CD8-positive, alpha-beta memory T cell (primary cell): ENCODE measurements at regions of chr16 and their contacts with region 1.

Region 1: GRCh38 chr16:50681021-50681885 is at the start of gene SNX20:
- DNase-seq: peak; percentile 55 to 81 (median 71)
- H3K4me3 ChIP-seq: peak within 1 kb of the TSS; percentile 89
- H3K4me3 Mint-ChIP-seq: peak within 1 kb of the TSS; percentile 91 to 99 (median 93)
- H3K27ac ChIP-seq: peak within 1 kb of the TSS; percentile 74
- H3K27ac Mint-ChIP-seq: peak within 1 kb of the TSS; percentile 90 to 98 (median 97)
- H3K4me1 ChIP-seq: peaks cover 94% of the 10 kb centered on the region
- H3K4me1 Mint-ChIP-seq: peaks cover 80 to 93% (median 92%) of the 10 kb centered on the region in 3 donors
- H3K27me3 ChIP-seq: no peaks in the 10 kb centered on the region
- H3K27me3 Mint-ChIP-seq: no peaks in the 10 kb centered on the region
- total RNA-seq, gene SNX20: 25.0 to 27.8 TPM

Region 2: DNA sequence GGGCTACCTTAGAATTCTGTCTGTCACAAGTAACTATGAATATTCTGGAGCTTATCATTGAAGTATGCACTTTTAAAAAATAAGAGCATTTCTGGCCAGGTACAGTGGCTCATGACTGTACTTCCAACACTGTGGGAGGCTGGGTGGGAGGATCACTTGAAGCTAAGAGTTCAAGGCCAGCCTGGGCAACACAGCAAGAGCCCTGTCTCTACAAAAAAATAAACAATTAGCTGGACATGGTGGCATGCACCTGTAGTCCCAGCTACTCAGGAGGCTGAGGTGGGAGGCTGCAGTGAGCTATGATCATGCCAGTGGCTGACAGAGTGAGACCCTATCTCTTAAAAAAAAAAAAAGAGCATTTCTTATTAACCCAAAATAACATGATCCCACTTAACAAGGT is 252.5 kb before region 1 on chr16:
- CTCF ChIA-PET with region 1: no interaction called
- POLR2A ChIA-PET with region 1: interaction called, 10 read pairs
- DNase-seq: no peak
- H3K4me3 ChIP-seq: no peak overlapping the region
- H3K4me3 Mint-ChIP-seq: no peak overlapping the region
- H3K27ac ChIP-seq: no peak overlapping the region
- H3K27ac Mint-ChIP-seq: no peak overlapping the region
- H3K4me1 ChIP-seq: no peaks in the 10 kb centered on the region
- H3K4me1 Mint-ChIP-seq: no peaks in the 10 kb centered on the region
- H3K27me3 ChIP-seq: peaks cover 4% of the 10 kb centered on the region
- H3K27me3 Mint-ChIP-seq: peaks cover 22 to 51% of the 10 kb centered on the region in 2 donors

Region 3: GRCh38 chr16:50573947-50574744 is 107.1 kb before region 1 on chr16:
- CTCF ChIA-PET with region 1: no interaction called
- POLR2A ChIA-PET with region 1: no interaction called
- DNase-seq: no peak
- H3K4me3 ChIP-seq: no peak overlapping the region
- H3K4me3 Mint-ChIP-seq: no peak overlapping the region
- H3K27ac ChIP-seq: no peak overlapping the region
- H3K27ac Mint-ChIP-seq: peak overlapping the region in 2 of 8 donors; percentile 26 to 31
- H3K4me1 ChIP-seq: no peaks in the 10 kb centered on the region
- H3K4me1 Mint-ChIP-seq: peaks cover 0 to 7% (median 0%) of the 10 kb centered on the region in 3 donors
- H3K27me3 ChIP-seq: no peaks in the 10 kb centered on the region
- H3K27me3 Mint-ChIP-seq: no peaks in the 10 kb centered on the region

Region 4: GRCh38 chr16:50696575-50697420 is 15.5 kb after region 1 on chr16:
- CTCF ChIA-PET with region 1: interaction called, 22 read pairs
- POLR2A ChIA-PET with region 1: interaction called, 16 read pairs
- DNase-seq: peak in 4 of 5 donors; percentile 30 to 81 (median 52)
- H3K4me3 ChIP-seq: peak overlapping the region; percentile 1
- H3K4me3 Mint-ChIP-seq: peak overlapping the region; percentile 86 to 95 (median 93)
- H3K27ac ChIP-seq: peak overlapping the region; percentile 78
- H3K27ac Mint-ChIP-seq: peak overlapping the region; percentile 94 to 99 (median 98)
- H3K4me1 ChIP-seq: peaks cover 57% of the 10 kb centered on the region
- H3K4me1 Mint-ChIP-seq: peaks cover 58 to 75% (median 71%) of the 10 kb centered on the region in 3 donors
- H3K27me3 ChIP-seq: no peaks in the 10 kb centered on the region
- H3K27me3 Mint-ChIP-seq: peaks cover 0 to 3% of the 10 kb centered on the region in 2 donors

Region 5: DNA sequence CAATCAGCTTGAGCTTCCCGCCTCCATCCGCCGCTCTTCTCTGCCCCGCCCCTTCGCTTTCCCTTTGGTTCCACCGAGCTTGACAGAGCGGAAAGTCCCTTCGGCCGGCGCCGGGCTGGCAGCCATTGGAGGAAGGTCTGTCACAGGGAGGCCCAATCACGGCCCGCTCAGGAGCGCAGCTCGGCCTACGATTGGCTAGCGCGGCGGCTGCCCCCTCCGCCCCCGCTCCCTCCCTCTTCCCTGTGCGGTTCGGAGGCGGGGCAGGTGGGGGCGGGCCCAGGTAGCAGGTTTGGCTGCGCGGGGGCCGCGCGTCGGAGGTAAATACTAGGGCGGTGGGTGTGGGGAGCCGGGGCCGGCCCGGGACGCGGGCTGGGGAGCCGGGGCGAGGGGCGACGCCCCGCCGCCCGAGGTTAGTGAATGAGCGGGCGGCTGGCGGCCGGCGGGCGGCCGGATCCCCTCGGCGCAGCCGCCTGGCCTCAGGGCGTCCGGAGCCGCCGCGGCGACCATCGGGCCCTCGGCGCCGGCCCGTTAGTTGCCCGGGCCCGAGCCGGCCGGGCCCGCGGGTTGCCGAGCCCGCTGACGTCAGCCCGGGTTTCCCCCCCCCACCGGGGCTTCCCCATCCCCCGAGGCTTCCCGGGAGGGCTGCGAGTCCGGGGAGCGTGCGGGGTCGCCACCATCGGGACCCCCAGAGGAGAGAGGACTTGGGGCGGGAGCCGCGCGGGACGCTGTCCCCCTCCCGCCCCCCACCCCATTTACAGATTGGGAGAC is 60.7 kb after region 1 on chr16 and contains the start of gene CYLD:
- CTCF ChIA-PET with region 1: interaction called, 7 read pairs
- POLR2A ChIA-PET with region 1: interaction called, 11 read pairs
- DNase-seq: peak; percentile 99 to 100 (median 100)
- H3K4me3 ChIP-seq: peak within 1 kb of the TSS; percentile 83
- H3K4me3 Mint-ChIP-seq: peak within 1 kb of the TSS; percentile 91 to 99 (median 96)
- H3K27ac ChIP-seq: peak within 1 kb of the TSS; percentile 96
- H3K27ac Mint-ChIP-seq: peak within 1 kb of the TSS; percentile 95 to 100 (median 98)
- H3K4me1 ChIP-seq: peaks cover 31% of the 10 kb centered on the region
- H3K4me1 Mint-ChIP-seq: peaks cover 42 to 53% (median 50%) of the 10 kb centered on the region in 3 donors
- H3K27me3 ChIP-seq: no peaks in the 10 kb centered on the region
- H3K27me3 Mint-ChIP-seq: peaks cover 0 to 4% of the 10 kb centered on the region in 2 donors
- total RNA-seq, gene CYLD: 144 to 152 TPM

Region 6: DNA sequence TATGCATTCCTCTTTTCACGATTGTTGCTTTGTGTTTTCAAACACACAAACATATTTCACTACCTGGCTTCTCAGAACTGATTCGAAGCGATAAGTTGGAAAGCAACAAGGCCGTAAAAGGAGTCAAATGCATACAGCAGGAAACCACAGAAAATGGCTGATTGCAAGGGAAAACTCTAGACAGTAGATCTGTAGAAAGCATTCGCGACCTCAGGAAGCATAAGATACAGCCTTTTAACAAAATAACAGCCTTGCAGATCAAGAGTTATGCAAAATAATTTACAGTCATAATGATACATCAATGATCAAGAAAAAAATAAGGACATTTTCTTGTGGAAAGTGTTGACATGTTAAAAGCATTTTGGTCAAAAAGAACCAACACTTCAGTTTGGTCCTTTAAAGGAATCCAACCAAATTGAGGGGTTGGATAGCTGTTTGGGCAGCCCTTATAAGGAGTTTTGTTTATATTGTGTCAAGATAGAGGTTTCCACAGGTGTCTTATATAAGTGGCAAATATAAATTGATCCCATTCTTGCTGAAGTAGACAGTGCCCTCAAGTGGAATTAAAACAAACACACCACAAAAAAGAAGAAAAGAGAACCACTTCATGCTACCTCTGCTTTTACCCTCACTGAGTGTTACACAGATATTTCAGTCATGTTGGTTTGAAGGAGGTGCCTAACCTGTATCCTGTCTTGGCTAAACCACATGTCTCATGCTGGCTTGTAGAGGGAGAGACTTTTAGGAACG is 66.1 kb after region 1 on chr16:
- CTCF ChIA-PET with region 1: interaction called, 7 read pairs
- POLR2A ChIA-PET with region 1: interaction called, 11 read pairs
- DNase-seq: peak in 2 of 5 donors; percentile 59 to 72
- H3K4me3 ChIP-seq: peak overlapping the region; percentile 49
- H3K4me3 Mint-ChIP-seq: peak overlapping the region; percentile 80 to 99 (median 96)
- H3K27ac ChIP-seq: peak overlapping the region; percentile 22
- H3K27ac Mint-ChIP-seq: peak overlapping the region; percentile 34 to 99 (median 94)
- H3K4me1 ChIP-seq: peaks cover 70% of the 10 kb centered on the region
- H3K4me1 Mint-ChIP-seq: peaks cover 62 to 87% (median 82%) of the 10 kb centered on the region in 3 donors
- H3K27me3 ChIP-seq: no peaks in the 10 kb centered on the region
- H3K27me3 Mint-ChIP-seq: peaks cover 0 to 3% of the 10 kb centered on the region in 2 donors

Region 7: DNA sequence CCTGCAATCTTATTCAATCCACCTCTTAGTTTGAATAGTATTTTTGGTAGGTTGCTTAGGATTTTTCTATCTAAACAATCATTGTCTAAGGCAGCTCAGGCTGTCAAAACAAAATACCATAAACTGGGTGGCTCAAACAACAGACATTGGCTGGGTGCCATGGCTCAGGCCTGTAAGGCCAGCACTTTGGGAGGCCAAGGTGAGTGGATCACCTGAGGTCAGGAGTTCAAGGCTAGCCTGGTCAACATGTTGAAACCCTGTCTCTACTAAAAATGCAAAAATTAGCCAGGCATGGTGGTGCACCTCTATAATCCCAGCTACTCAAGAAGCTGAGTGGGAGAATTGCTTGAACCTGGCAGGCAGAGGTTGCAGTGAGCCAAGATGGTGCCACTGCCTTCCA is 187.3 kb after region 1 on chr16:
- CTCF ChIA-PET with region 1: no interaction called
- POLR2A ChIA-PET with region 1: no interaction called
- DNase-seq: no peak
- H3K4me3 ChIP-seq: no peak overlapping the region
- H3K4me3 Mint-ChIP-seq: no peak overlapping the region
- H3K27ac ChIP-seq: no peak overlapping the region
- H3K27ac Mint-ChIP-seq: peak overlapping the region in 1 of 8 donors; percentile 30
- H3K4me1 ChIP-seq: no peaks in the 10 kb centered on the region
- H3K4me1 Mint-ChIP-seq: no peaks in the 10 kb centered on the region
- H3K27me3 ChIP-seq: no peaks in the 10 kb centered on the region
- H3K27me3 Mint-ChIP-seq: peaks cover 0 to 9% of the 10 kb centered on the region in 2 donors